ENCODE measurements at regions of chr14 and their contacts with region 1.

Region 1: DNA sequence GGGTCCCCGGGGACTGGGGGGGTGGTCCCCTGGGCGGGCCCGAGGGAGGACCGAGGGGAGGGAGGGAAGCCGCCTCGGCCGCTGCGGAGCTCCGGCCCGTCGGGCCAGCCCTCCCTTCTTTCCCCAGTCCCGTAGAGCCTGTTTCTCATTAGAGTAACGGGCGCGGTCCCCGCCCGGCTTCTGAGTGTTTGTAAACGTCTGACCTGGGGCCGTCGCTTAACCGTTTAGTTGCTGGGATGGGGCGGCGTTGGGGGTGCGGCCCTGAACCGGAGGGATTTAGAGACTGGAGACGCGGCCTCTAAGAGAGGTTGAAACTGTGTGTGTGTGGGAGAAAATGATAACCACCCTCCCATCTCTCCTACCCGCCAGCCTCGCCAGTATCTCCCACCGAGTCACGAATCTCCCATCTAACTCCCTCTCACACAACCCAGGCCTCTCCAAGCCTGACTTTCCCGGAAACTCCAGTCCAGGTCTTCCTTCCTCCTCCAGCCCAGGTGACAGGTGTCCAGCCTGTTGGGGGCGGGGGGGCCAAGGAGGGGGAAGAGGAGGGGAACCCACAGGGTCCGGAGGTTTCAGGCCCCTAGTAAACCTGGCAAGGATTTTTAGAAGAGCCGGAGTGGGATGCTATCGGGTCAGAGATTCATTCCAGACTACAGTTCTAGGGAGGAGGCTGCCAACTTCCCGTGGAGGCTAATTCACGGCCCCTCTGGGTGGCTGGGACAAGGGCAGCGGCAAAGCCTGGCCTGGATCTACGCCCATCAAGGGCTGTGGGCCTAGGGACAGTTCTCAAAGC is 1.1 kb upstream of the NFATC4 start:
- DNase-seq: peak; percentile 92
- ATAC-seq: peak; percentile 83
- H3K4me3 ChIP-seq: peak overlapping the region; percentile 71 to 80 (median 74)
- H3K27ac ChIP-seq: no peak overlapping the region
- H3K4me1 ChIP-seq: peaks cover 26% of the 10 kb centered on the region
- H3K27me3 ChIP-seq: peaks cover 20 to 54% of the 10 kb centered on the region in 2 experiments
- CTCF ChIP-seq: no peak; the same call in 1 of the 2 replicates
- EP300 ChIP-seq: peak in 1 of 2 experiments; percentile 29; a peak in 1 of 4 replicates
- POLR2A ChIP-seq: no peak
- RAD21 ChIP-seq: no peak

Region 2: GRCh38 chr14:23816371-23816770 is 550.5 kb before region 1 on chr14:
- CTCF ChIA-PET with region 1: no interaction called
- POLR2A ChIA-PET with region 1: no interaction called
- in situ Hi-C with region 1: no loop called
- intact Hi-C with region 1: no loop called
- DNase-seq: no peak
- ATAC-seq: no peak
- H3K4me3 ChIP-seq: no peak overlapping the region
- H3K27ac ChIP-seq: no peak overlapping the region
- H3K4me1 ChIP-seq: no peaks in the 10 kb centered on the region
- H3K27me3 ChIP-seq: no peaks in the 10 kb centered on the region
- CTCF ChIP-seq: no peak
- EP300 ChIP-seq: no peak
- POLR2A ChIP-seq: no peak
- RAD21 ChIP-seq: no peak

Region 3: DNA sequence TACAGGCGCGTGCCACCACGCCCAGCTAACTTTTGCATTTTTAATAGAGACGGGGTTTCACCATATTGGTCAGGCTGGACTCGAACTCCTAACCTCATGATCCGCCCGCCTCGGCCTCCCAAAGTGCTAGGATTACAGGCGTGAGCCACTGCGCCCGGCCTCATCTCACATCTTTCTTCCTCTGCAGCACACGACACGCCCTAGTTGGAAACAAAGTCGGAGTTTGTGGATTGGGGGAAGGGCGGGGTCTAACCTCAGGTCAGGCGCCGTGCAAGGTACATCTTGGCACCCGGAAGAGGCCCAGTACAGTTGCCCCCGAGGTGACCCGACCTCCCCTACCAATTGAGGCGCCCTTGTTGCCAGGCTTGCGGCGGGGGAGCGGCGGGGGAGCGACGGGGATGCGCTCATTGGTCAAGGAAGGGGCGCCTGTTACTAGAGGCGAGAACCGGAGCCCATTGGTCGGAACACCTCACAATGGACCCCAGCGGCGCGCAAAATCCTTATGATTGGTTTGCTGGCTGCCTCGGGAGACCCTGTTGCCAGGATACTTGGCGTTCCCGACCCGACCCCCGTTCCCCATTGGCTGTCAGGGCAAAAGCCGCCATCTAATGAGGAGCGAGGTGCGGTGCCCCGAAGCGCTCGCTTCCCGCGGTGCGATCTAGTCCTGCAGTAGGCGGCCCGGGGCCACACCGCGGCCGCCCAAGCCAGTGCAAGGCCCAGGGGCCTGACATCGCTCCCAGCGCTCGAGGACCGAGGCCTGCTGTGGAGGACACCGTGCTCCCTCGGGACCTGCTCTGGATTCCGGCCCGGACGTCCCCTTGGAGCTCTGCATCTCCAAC is 195.3 kb before region 1 on chr14 and contains the start of gene REC8:
- CTCF ChIA-PET with region 1: no interaction called
- POLR2A ChIA-PET with region 1: no interaction called
- in situ Hi-C with region 1: no loop called
- intact Hi-C with region 1: no loop called
- DNase-seq: no peak
- ATAC-seq: peak; percentile 15
- H3K4me3 ChIP-seq: no peak within 1 kb of the TSS
- H3K27ac ChIP-seq: no peak within 1 kb of the TSS
- H3K4me1 ChIP-seq: no peaks in the 10 kb centered on the region
- H3K27me3 ChIP-seq: no peaks in the 10 kb centered on the region
- CTCF ChIP-seq: no peak
- EP300 ChIP-seq: no peak
- POLR2A ChIP-seq: peak in 1 of 2 experiments; percentile 16; a peak in 1 of 4 replicates
- RAD21 ChIP-seq: no peak
- total RNA-seq, gene REC8: 3.4 TPM in 1 of 2 replicates, not detected in the other

Region 4: GRCh38 chr14:24442273-24443052 is 75.5 kb after region 1 on chr14 and contains the start of gene SDR39U1:
- CTCF ChIA-PET with region 1: interaction called, 295 read pairs
- POLR2A ChIA-PET with region 1: interaction called, 31 read pairs
- in situ Hi-C with region 1: no loop called
- intact Hi-C with region 1: no loop called
- DNase-seq: peak; percentile 100
- ATAC-seq: peak; percentile 91
- H3K4me3 ChIP-seq: peak within 1 kb of the TSS; percentile 74 to 98 (median 84)
- H3K27ac ChIP-seq: peak within 1 kb of the TSS; percentile 93
- H3K4me1 ChIP-seq: peaks cover 18% of the 10 kb centered on the region
- H3K27me3 ChIP-seq: peaks cover 0 to 5% of the 10 kb centered on the region in 2 experiments; a peak in 1 of 5 replicates
- CTCF ChIP-seq: peak; percentile 50
- EP300 ChIP-seq: 0 out of 4 replicates have a peak, but pooled peaks have one; percentile 44 to 47
- POLR2A ChIP-seq: peak in 1 of 2 experiments; percentile 98; a peak in 2 of 4 replicates
- RAD21 ChIP-seq: no peak; the same call in 1 of the 2 replicates
- total RNA-seq, gene SDR39U1: 25.0 and 34.4 TPM in 2 replicates

Region 5: DNA sequence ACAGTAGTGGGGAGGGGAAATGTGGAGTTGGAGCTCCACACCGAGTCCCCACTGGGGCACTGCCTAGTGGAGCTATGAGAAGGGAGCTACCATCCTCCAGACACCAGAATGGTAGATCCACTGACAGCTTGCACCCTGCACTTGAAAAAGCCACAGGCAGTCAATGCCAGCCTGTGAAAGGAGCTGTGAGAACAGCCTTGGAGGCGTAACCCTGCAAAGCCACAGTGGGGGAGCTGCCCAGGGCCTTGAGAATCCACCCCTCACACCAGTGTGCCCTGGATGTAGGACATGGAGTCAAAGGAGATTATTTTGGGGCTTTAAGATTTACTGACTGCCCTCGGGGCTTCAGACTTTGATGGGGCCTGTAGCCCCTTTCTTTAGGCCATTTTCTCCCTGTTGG is 196.6 kb after region 1 on chr14:
- CTCF ChIA-PET with region 1: no interaction called
- POLR2A ChIA-PET with region 1: no interaction called
- in situ Hi-C with region 1: no loop called
- intact Hi-C with region 1: loop called (anchors 5 kb)
- DNase-seq: no peak
- ATAC-seq: peak; percentile 39; the same call in 2 of the 3 replicates
- H3K4me3 ChIP-seq: no peak overlapping the region
- H3K27ac ChIP-seq: no peak overlapping the region
- H3K4me1 ChIP-seq: no peaks in the 10 kb centered on the region
- H3K27me3 ChIP-seq: no peaks in the 10 kb centered on the region
- CTCF ChIP-seq: peak; percentile 22
- EP300 ChIP-seq: no peak
- POLR2A ChIP-seq: no peak
- RAD21 ChIP-seq: no peak